ENCODE measurements at regions of chr2 and their contacts with region 1.

Region 1: GRCh38 chr2:234135720-234136221 is 85.3 kb downstream of the SPP2 start:
- DNase-seq: peak; percentile 81
- H3K4me3 ChIP-seq: no peak overlapping the region
- H3K27ac ChIP-seq: no peak overlapping the region
- H3K4me1 ChIP-seq: no peaks in the 10 kb centered on the region
- H3K27me3 ChIP-seq: no peaks in the 10 kb centered on the region
- CTCF ChIP-seq: peak; percentile 82

Region 2: GRCh38 chr2:233976690-233977294 is 159.0 kb before region 1 on chr2:
- CTCF ChIA-PET with region 1: interaction called, 3 read pairs
- POLR2A ChIA-PET with region 1: no interaction called
- intact Hi-C with region 1: loop called (anchors 5 kb)
- DNase-seq: peak; percentile 67
- H3K4me3 ChIP-seq: no peak overlapping the region
- H3K27ac ChIP-seq: no peak overlapping the region
- H3K4me1 ChIP-seq: no peaks in the 10 kb centered on the region
- H3K27me3 ChIP-seq: no peaks in the 10 kb centered on the region
- CTCF ChIP-seq: peak; percentile 56

Region 3: GRCh38 chr2:234032279-234032856 is 103.4 kb before region 1 on chr2:
- CTCF ChIA-PET with region 1: no interaction called
- POLR2A ChIA-PET with region 1: no interaction called
- intact Hi-C with region 1: no loop called
- DNase-seq: peak; percentile 31
- H3K4me3 ChIP-seq: no peak overlapping the region
- H3K27ac ChIP-seq: no peak overlapping the region
- H3K4me1 ChIP-seq: peaks cover 8% of the 10 kb centered on the region
- H3K27me3 ChIP-seq: peaks cover 30% of the 10 kb centered on the region
- CTCF ChIP-seq: no peak

Region 4: DNA sequence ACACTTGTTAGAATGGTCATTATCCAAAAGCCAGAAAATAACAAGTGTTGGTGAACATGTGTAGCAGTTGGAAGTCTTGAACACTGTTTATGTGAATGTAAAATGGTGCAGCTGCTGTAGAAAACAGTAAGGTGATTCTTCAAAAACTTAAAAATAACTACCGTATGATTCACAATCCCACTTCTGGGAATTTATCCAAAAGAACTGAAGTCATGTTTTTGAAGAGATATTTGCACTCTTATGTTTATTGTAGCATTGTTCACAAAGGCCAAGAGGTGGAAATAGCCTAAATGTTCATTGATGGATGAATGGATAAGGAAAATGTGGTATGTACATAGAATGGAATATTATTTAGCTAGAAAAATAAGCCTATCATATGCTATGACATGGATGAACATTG is 91.6 kb before region 1 on chr2:
- CTCF ChIA-PET with region 1: no interaction called
- POLR2A ChIA-PET with region 1: no interaction called
- intact Hi-C with region 1: no loop called
- DNase-seq: no peak
- H3K4me3 ChIP-seq: no peak overlapping the region
- H3K27ac ChIP-seq: no peak overlapping the region
- H3K4me1 ChIP-seq: no peaks in the 10 kb centered on the region
- H3K27me3 ChIP-seq: peaks cover 43% of the 10 kb centered on the region
- CTCF ChIP-seq: no peak

Region 5: GRCh38 chr2:234257856-234258561 is 122.2 kb after region 1 on chr2:
- CTCF ChIA-PET with region 1: interaction called, 4 read pairs
- POLR2A ChIA-PET with region 1: no interaction called
- intact Hi-C with region 1: loop called (anchors 5 kb)
- DNase-seq: peak; percentile 65
- H3K4me3 ChIP-seq: no peak overlapping the region
- H3K27ac ChIP-seq: no peak overlapping the region
- H3K4me1 ChIP-seq: no peaks in the 10 kb centered on the region
- H3K27me3 ChIP-seq: no peaks in the 10 kb centered on the region
- CTCF ChIP-seq: peak; percentile 36

Region 6: DNA sequence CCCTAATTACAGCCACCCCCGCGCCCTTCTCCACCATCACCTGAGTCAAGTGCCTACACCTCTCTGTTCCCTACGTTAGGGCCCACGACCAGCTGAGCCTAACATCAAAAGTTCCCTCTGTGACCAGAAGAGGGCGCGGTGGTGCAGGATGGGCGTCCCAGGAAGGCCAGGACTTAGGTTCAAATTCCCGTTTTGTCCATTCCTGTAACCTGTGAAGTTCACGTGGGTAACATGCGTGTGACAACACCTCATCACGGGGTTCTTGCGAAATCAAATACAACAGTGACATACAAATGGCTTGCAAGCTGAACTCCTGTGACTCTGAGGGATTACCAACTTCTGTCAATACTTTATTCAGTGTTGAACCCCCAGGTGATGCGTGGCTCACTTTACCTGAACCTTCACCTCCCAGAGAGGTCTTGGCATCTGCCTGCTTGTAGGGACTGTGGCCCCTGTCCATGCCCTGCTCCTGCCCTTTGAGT is 153.2 kb after region 1 on chr2:
- CTCF ChIA-PET with region 1: interaction called, 6 read pairs
- POLR2A ChIA-PET with region 1: no interaction called
- intact Hi-C with region 1: loop called (anchors 5 kb)
- DNase-seq: peak; percentile 61
- H3K4me3 ChIP-seq: no peak overlapping the region
- H3K27ac ChIP-seq: no peak overlapping the region
- H3K4me1 ChIP-seq: no peaks in the 10 kb centered on the region
- H3K27me3 ChIP-seq: no peaks in the 10 kb centered on the region
- CTCF ChIP-seq: peak; percentile 91

Region 7: DNA sequence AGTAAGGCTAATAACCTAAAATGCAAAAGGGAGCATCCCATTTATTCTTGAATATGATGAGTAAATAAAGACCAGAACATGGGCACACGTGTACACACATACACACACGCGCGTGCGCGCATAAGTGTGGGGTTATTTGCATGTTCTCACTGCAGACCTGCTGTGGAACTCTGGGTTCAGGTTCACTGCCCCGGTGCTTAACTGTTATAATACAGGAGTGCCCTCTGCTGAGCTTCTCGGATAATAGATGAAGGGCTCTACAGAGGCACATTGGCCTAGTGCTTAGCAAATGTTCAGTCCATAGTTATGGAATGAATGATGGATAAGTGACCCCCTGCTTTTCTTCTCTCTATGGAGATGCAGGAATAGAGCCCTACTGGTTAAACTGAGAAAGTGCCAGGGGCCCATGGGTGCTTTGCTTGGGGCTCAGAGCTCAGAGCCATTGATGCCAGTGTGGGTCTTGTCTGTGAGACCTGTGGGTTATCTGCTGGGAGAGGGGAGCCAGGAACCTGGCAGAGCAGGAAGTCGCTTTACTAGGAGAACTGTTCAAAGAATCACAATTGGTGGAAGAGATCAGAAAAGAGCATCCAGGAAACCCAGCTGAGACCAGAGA is 364.7 kb after region 1 on chr2:
- CTCF ChIA-PET with region 1: interaction called, 5 read pairs
- POLR2A ChIA-PET with region 1: no interaction called
- intact Hi-C with region 1: loop called (anchors 5 kb)
- DNase-seq: peak; percentile 57
- H3K4me3 ChIP-seq: no peak overlapping the region
- H3K27ac ChIP-seq: no peak overlapping the region
- H3K4me1 ChIP-seq: no peaks in the 10 kb centered on the region
- H3K27me3 ChIP-seq: no peaks in the 10 kb centered on the region
- CTCF ChIP-seq: peak; percentile 57

Region 8: GRCh38 chr2:234544659-234545611 is 409.2 kb after region 1 on chr2:
- CTCF ChIA-PET with region 1: interaction called, 11 read pairs
- POLR2A ChIA-PET with region 1: no interaction called
- intact Hi-C with region 1: loop called (anchors 2 kb)
- DNase-seq: peak; percentile 78
- H3K4me3 ChIP-seq: no peak overlapping the region
- H3K27ac ChIP-seq: no peak overlapping the region
- H3K4me1 ChIP-seq: no peaks in the 10 kb centered on the region
- H3K27me3 ChIP-seq: no peaks in the 10 kb centered on the region
- CTCF ChIP-seq: peak; percentile 87

Region 9: GRCh38 chr2:235116885-235117492 is 981.2 kb after region 1 on chr2:
- CTCF ChIA-PET with region 1: no interaction called
- POLR2A ChIA-PET with region 1: no interaction called
- intact Hi-C with region 1: loop called (anchors 2 kb)
- DNase-seq: peak; percentile 79
- H3K4me3 ChIP-seq: no peak overlapping the region
- H3K27ac ChIP-seq: no peak overlapping the region
- H3K4me1 ChIP-seq: no peaks in the 10 kb centered on the region
- H3K27me3 ChIP-seq: no peaks in the 10 kb centered on the region
- CTCF ChIP-seq: peak; percentile 74

Measured in A673 (cell line).